AG04449 (cell line): ENCODE measurements at regions of chr12 and their contacts with region 1.

Region 1: DNA sequence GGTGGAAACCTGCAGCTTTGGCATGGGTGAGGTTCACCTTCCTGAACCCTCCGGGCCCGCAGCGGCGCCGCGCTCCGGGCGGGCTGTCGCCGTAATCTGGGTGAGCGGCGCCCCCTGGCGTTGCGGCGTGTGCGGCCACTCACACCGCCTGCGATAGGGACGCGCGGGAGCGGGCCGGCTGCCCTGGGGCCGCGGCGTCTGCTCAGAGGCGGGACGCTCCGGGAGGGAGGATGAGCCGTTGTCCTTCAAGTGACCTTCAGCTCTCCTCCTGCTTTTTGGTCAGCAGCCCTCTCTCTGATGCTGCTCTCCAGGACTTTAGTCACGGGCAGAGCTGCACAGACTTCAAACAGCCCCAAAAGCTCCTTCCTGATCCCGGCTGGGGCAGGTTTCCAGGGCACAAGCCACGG is 211.7 kb upstream of the FKBP4 start:
- DNase-seq: no peak
- H3K4me3 ChIP-seq: peak overlapping the region; percentile 32
- CTCF ChIP-seq: peak; percentile 87

Region 2: DNA sequence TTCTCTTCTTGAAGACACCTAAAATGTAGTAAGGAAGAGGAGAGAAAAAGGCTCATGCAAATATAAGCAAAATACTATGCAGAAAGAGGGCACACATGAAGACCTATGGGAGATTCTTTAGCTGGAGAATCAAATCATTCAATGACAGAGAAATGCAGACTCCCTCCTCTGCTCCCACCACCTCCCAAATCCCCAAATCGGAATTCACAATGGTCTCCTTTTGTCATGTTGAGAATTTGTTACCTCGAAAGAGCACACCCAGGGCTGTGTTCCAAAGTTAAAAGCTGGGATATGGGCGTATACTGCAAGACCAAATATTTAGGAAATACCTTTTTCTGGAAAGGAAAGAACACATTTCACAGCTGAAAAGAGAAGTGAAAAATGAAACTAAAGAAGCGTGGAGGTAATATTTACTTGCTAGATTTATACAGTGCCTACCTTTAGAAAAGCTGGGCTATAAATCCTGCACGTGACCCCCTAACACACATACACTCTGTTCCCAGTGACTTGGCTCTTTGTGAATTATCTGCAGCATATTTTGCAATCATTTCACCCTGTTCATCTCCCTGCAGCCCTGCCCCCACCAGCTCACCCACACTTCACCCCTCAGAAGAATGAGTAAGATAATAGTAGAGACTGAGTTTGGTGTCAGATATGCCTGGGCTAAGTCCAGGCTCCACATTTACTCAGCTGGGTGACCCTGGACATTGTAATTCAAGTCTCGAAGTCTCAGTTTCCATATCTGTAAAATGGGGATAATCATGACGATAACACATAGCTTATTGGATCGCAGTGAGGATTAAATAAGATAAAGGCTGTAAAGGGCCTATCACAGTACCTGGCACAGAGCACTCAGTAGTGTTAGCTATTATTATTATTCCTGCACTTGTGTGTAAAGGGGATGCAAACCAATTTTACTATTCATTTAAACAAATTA is 533.2 kb before region 1 on chr12:
- CTCF ChIA-PET with region 1: interaction called, 10 read pairs
- POLR2A ChIA-PET with region 1: no interaction called
- DNase-seq: no peak
- H3K4me3 ChIP-seq: no peak overlapping the region
- CTCF ChIP-seq: no peak

Region 3: DNA sequence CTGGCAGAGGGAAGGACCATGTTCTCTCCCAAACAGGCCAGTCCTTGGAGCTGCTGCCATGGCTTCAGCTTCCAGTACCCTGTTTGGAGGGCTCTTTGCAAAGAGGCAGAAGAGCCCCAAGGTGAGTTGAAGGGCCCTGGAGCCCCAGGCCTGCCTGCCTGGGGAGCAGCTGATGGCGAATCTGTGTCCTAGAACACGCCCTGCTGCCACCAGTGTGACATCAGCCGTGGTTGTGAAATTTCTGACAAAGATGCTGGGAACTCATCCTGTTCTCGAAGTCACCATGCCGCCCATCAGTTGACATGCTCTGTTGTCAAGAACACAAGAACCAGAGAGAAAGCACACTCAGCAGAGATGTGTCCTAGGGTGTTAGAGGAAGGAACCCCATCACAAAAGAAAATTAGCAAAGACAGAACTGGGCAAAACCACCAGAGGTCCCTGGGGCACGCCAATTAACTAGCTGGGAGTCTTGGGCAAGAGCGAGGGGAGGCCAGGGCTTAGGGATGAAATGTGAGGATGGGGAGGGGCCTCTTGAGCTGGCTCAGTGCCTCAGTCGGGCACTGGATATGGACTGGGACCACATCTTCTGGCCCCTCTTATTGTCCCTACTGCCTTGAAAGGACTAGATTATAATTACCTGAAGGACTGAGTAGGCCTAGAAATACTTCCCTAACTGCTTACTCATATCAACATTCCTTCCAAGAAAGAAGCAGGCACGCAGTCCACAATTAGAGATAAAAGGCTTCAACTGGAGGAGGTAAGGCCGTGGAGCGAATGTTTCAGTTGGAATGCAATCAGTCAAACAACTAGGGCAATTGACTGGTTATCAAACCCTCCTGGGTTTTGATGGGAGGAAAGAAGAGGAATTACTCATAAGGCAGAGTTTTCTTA is 367.2 kb before region 1 on chr12:
- CTCF ChIA-PET with region 1: no interaction called
- POLR2A ChIA-PET with region 1: no interaction called
- DNase-seq: no peak
- H3K4me3 ChIP-seq: no peak overlapping the region
- CTCF ChIP-seq: no peak

Region 4: DNA sequence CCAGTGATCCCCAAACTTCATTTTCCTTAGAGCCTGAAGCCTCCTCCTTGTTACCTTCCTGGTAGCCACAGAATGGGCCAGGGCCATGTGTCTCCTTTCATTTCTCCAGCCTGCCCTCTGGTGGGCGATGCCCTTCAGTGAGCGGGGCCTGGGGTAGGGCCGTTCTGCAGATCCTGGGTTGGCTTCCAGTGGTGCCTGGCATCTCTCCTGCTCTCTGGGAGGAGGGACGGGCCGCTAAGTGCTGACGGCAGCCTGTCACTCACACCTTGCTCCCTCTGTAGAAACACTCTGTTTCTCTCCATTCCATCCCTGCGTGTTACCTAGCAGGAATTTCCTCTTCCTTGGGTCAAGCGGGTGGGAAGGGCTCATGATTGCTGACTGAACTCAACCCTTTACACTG is 298.2 kb before region 1 on chr12:
- CTCF ChIA-PET with region 1: interaction called, 19 read pairs
- POLR2A ChIA-PET with region 1: no interaction called
- DNase-seq: no peak
- H3K4me3 ChIP-seq: peak overlapping the region; percentile 24
- CTCF ChIP-seq: peak; percentile 87

Region 5: DNA sequence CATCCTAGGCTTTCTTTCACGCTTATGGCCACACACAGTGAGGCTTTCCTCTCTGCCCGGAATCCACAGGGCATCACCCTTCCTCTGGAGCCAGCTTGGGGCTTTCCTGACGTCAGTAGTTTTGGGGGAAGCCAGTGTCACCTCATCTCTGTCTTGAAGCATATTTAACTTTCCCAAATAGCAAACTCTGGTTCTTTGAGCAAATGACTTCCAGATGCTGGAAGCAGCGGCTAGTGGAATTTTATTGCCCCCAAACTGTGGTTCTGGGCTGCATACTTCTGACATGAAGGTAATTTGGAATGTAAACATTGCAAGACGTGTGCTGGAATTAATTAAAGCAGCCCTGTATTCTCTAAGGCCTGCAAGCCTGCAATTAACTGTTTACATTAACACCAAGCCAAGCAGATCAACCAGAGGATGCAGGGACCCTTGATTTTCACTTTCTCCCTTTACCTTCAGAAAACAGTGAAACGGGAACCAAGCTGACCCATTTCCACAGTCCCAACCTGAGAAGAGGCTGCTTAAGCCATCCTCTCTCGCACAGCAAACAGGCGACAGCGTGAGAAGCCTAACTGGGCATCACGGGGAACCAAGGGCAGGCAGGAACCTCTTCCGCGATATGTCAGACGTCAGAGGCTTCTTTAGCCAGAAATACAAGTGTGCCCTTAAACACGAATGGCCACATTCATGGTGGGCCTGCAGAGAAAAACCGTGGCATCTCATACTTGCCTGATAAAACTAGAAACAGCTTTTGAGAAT is 271.9 kb before region 1 on chr12:
- CTCF ChIA-PET with region 1: interaction called, 10 read pairs
- POLR2A ChIA-PET with region 1: no interaction called
- DNase-seq: peak; percentile 84
- H3K4me3 ChIP-seq: no peak overlapping the region; the same call in 1 of the 2 replicates
- CTCF ChIP-seq: no peak

Region 6: GRCh38 chr12:2561367-2561766 is 21.7 kb before region 1 on chr12:
- CTCF ChIA-PET with region 1: interaction called, 27 read pairs
- POLR2A ChIA-PET with region 1: no interaction called
- DNase-seq: no peak
- H3K4me3 ChIP-seq: no peak overlapping the region
- CTCF ChIP-seq: no peak

Region 7: DNA sequence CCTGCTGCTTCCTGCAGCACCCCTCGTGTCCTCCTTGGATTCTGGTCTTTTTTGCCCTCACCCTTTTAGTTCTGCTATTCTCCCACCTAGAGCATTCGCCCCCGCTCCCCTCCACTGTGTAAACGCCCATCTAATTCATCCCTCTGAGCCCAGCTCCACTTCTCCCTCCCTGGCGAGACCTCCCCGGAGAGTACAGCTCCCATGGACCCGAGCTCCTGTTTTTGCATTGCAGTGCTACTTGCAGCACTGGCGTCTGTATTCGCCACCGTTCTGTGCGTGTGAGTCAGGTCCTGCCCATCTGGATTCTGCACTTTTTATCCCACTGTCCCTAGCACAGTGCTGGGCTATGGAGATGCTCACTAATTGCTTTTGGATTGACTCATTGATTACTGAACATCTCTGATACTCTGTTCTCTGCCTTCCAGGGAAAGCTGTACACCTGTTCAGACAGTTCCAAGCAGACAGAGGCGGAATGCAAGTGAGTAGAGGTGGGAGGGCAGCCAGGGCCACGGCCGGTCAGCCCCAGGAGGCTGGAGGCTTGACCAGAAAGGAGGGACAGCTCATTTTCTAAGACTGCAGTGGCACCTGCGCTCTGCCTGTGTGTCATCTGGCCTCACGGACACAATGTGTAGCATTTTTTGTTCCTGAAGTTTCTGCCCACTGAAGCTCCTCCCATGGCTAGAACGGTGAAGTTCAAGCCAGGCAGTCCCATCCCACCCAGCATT is 23.3 kb after region 1 on chr12:
- CTCF ChIA-PET with region 1: interaction called, 30 read pairs
- POLR2A ChIA-PET with region 1: no interaction called
- DNase-seq: no peak
- H3K4me3 ChIP-seq: no peak overlapping the region
- CTCF ChIP-seq: no peak

Region 8: GRCh38 chr12:2616763-2617162 is 33.7 kb after region 1 on chr12:
- CTCF ChIA-PET with region 1: no interaction called
- POLR2A ChIA-PET with region 1: no interaction called
- DNase-seq: no peak
- H3K4me3 ChIP-seq: no peak overlapping the region
- CTCF ChIP-seq: no peak